H1 (cell line): ENCODE measurements at regions of chr11 and their contacts with region 1.

Region 1: GRCh38 chr11:65652511-65653231 is 10.0 kb downstream of the RELA start:
- DNase-seq: peak in 1 of 2 experiments; percentile 93
- H3K4me3 ChIP-seq: peak overlapping the region; percentile 45 to 72 (median 60)
- H3K27ac ChIP-seq: peak overlapping the region; percentile 77
- H3K4me1 ChIP-seq: peaks cover 0 to 12% (median 8%) of the 10 kb centered on the region in 4 experiments; a peak in 5 of 7 replicates
- H3K27me3 ChIP-seq: peaks cover 0 to 4% (median 2%) of the 10 kb centered on the region in 4 experiments; a peak in 1 of 7 replicates
- CTCF ChIP-seq: no peak
- EP300 ChIP-seq: no peak
- POLR2A ChIP-seq: peak in 1 of 2 experiments; percentile 65; a peak in 2 of 3 replicates
- RAD21 ChIP-seq: no peak

Region 2: DNA sequence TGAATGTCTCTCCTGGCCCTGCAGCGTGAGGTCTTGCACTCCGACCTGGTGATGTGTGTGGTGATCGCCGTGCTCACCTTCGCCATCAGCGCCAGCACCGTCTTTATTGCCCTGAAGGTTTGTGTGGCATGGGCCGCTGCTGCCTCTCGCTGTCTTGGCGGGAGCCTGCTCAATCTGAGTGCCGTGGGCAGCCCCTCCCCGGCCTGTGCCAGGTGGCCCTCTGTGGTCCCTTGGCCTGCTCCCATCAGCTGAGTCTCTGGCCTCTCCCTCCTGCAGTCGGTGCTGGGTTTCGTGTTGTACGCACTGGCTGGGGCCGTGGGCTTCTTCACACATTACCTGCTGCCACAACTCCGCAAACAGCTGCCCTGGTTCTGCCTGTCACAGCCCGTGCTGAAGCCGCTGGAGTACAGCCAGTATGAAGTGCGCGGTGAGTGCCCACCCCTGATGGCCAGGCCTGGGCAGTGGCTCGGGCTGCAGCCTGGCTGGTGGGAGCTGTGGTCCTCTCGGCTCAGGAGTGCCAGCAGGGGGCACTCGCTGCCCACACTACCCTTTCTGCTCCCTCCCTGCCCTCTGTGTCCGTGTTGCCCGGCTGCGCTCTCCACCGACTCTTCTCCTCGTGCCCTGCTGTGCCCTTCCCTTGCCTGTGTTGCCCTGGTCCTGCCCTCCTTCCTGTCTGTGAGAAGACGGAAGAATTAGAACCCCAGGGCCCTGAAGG is 26.9 kb before region 1 on chr11:
- CTCF ChIA-PET with region 1: interaction called, 9 read pairs
- POLR2A ChIA-PET with region 1: interaction called, 18 read pairs
- DNase-seq: peak in 1 of 2 experiments; percentile 70
- H3K4me3 ChIP-seq: no peak overlapping the region
- H3K27ac ChIP-seq: no peak overlapping the region
- H3K4me1 ChIP-seq: no peaks in the 10 kb centered on the region
- H3K27me3 ChIP-seq: no peaks in the 10 kb centered on the region
- CTCF ChIP-seq: peak in 2 of 3 experiments; percentile 42 to 59; a peak in 2 of 4 replicates
- EP300 ChIP-seq: no peak
- POLR2A ChIP-seq: no peak
- RAD21 ChIP-seq: peak; percentile 61 to 64

Region 3: DNA sequence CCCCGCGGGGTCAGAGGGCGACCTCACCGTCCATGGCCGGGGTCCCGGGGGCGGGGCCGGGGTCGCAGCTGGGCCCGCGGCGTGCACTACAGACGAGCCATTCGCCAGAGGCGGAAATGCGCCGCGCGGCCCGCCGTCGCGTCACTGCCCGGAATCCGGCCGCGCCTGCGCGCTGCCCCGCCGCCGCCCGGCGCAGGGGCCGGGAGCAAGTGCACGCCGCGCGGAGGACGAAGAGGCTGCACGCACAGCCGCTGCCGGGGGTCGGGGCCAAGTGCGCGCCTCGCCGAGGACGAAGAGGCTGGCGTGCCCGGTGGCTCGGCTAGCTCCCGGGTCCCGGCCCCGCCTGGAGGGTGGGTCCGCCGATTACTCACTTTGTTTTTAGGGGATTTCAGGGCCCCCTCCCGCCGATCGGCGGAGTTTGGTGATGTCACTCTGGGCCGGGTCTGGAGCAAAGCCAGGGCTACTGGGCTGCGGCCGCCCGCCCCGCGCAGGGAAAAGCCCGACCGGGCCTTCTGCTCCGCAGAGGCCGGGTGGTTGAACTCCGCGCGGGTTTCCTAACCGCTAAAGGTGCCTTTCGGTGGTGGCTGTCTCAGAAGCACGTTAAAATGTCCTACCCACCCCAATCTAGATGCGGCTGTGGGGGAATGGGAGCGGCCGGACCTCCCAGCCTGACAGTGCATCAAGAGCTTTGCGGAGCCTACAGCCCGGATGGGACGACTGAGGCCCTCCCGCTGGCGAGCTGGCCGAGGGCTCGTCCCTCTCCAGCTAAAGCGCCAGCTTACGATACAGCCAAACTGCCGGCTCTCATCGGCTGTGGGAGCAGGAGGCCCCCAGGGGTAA is 10.3 kb after region 1 on chr11 and contains the start of gene RELA:
- CTCF ChIA-PET with region 1: interaction called, 10 read pairs
- POLR2A ChIA-PET with region 1: interaction called, 58 read pairs
- DNase-seq: peak in 1 of 2 experiments; percentile 91
- H3K4me3 ChIP-seq: peak within 1 kb of the TSS; percentile 81 to 86 (median 84)
- H3K27ac ChIP-seq: peak within 1 kb of the TSS; percentile 71
- H3K4me1 ChIP-seq: peaks cover 0 to 5% (median 2%) of the 10 kb centered on the region in 4 experiments; a peak in 4 of 7 replicates
- H3K27me3 ChIP-seq: no peaks in the 10 kb centered on the region
- CTCF ChIP-seq: no peak
- EP300 ChIP-seq: peak in 1 of 2 experiments; percentile 66; a peak in 1 of 3 replicates
- POLR2A ChIP-seq: peak in 1 of 2 experiments; percentile 51; a peak in 2 of 3 replicates
- RAD21 ChIP-seq: no peak
- total RNA-seq, gene RELA: 25.5 and 27.5 TPM in 2 replicates

Region 4: GRCh38 chr11:65743928-65744698 is 91.4 kb after region 1 on chr11:
- CTCF ChIA-PET with region 1: no interaction called
- POLR2A ChIA-PET with region 1: no interaction called
- DNase-seq: peak in 1 of 2 experiments; percentile 50
- H3K4me3 ChIP-seq: no peak overlapping the region
- H3K27ac ChIP-seq: no peak overlapping the region
- H3K4me1 ChIP-seq: no peaks in the 10 kb centered on the region
- H3K27me3 ChIP-seq: peaks cover 0 to 2% (median 0%) of the 10 kb centered on the region in 4 experiments; a peak in 1 of 7 replicates
- CTCF ChIP-seq: peak; percentile 44 to 78 (median 61)
- EP300 ChIP-seq: no peak
- POLR2A ChIP-seq: no peak
- RAD21 ChIP-seq: peak; percentile 62 to 72